CD8-positive, alpha-beta T cell (primary cell): ENCODE measurements at regions of chr3 and their contacts with region 1.

Region 1: DNA sequence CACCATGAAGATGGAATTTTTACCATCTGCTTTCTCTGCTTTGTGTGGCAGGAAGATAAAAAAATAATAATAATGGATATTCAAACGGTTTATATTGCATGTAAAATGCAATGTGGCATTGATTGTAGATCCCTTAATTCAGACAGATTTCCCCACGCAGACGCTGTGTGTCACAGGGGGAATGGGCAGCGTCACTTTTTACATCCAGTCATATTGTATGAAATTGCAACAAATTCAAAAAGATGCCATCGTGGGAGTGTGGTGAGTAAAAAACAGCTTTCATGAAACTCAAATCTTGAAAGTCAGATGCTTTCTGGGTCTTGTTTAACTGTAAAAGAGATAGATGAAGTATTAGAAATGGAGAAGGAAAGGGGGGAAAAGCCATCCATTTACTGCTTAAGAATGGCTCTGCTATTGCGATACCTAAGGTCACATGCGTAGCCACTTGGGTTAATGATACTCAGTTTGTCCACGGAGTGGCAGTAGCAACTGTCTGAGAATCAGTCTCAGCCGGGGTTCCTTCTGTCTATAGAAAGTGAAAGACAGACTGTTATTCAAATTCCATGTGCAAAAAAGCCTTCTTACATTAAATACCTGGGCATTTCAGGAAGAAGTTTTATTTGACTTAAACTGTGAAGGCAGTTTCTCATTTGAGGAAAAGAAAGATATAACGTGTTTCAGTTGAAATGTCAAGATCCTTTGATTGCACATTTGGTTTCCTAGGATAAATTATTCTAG is 28.5 kb downstream of the BTD start:
- DNase-seq: peak; percentile 34 to 87 (median 60)
- ATAC-seq: peak; percentile 100
- H3K4me3 ChIP-seq: no peak overlapping the region
- H3K4me3 Mint-ChIP-seq: peak overlapping the region; percentile 64
- H3K27ac ChIP-seq: no peak overlapping the region
- H3K27ac Mint-ChIP-seq: peak overlapping the region; percentile 16
- H3K4me1 ChIP-seq: peaks cover 3% of the 10 kb centered on the region
- H3K4me1 Mint-ChIP-seq: peaks cover 23% of the 10 kb centered on the region
- H3K27me3 ChIP-seq: no peaks in the 10 kb centered on the region
- H3K27me3 Mint-ChIP-seq: no peaks in the 10 kb centered on the region
- CTCF ChIP-seq: peak; percentile 60

Region 2: DNA sequence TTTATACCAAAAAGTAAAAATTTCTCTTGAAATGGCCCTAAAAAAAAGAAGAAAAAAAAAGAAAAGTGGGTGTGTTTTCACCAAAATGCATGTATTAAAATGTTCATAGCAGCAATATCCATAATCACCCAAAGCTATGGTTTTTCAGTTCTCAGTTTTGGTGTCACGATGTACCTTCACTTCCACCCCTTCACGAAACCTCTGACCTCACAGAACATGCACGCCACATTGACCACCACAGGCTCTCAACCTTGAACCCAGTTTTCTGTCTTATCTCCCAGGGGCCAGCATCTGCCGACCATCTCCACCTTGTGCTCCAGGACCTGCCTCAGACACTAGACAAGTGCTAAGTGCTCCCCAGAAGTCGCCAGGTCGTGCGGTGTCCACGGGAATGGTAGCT is 138.9 kb before region 1 on chr3:
- CTCF ChIA-PET with region 1: no interaction called
- POLR2A ChIA-PET with region 1: no interaction called
- intact Hi-C with region 1: no loop called
- DNase-seq: no peak
- ATAC-seq: no peak
- H3K4me3 ChIP-seq: no peak overlapping the region
- H3K4me3 Mint-ChIP-seq: no peak overlapping the region
- H3K27ac ChIP-seq: no peak overlapping the region
- H3K27ac Mint-ChIP-seq: no peak overlapping the region
- H3K4me1 ChIP-seq: no peaks in the 10 kb centered on the region
- H3K4me1 Mint-ChIP-seq: peaks cover 5% of the 10 kb centered on the region
- H3K27me3 ChIP-seq: no peaks in the 10 kb centered on the region
- H3K27me3 Mint-ChIP-seq: no peaks in the 10 kb centered on the region
- CTCF ChIP-seq: no peak

Region 3: GRCh38 chr3:15667484-15667883 is 37.5 kb after region 1 on chr3:
- CTCF ChIA-PET with region 1: no interaction called
- POLR2A ChIA-PET with region 1: interaction called, 3 read pairs
- intact Hi-C with region 1: loop called (anchors 2 to 5 kb)
- DNase-seq: peak in 6 of 9 experiments; percentile 11 to 81 (median 46)
- ATAC-seq: peak; percentile 86
- H3K4me3 ChIP-seq: no peak overlapping the region
- H3K4me3 Mint-ChIP-seq: no peak overlapping the region
- H3K27ac ChIP-seq: no peak overlapping the region
- H3K27ac Mint-ChIP-seq: peak overlapping the region; percentile 17
- H3K4me1 ChIP-seq: peaks cover 15% of the 10 kb centered on the region
- H3K4me1 Mint-ChIP-seq: peaks cover 23% of the 10 kb centered on the region
- H3K27me3 ChIP-seq: no peaks in the 10 kb centered on the region
- H3K27me3 Mint-ChIP-seq: no peaks in the 10 kb centered on the region
- CTCF ChIP-seq: no peak

Region 4: DNA sequence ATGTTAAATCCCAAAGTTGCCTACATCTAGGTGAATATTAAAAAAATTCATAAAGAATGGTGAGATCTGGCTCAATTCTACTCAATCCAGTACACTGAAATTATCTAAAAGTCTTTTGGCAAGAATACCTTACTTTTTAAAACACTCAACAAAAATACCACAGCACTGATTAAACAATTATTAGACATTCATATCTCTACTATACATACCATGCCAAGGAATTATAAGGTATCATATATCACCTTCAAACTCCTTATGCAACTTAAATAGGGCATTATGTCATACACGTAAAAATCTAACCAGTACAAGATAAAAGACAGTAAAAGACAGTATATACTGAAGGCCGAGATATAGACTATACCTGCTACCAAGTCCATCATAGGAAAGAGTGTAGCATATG is 173.9 kb after region 1 on chr3:
- CTCF ChIA-PET with region 1: interaction called, 10 read pairs
- POLR2A ChIA-PET with region 1: no interaction called
- intact Hi-C with region 1: no loop called
- DNase-seq: no peak
- ATAC-seq: no peak
- H3K4me3 ChIP-seq: no peak overlapping the region
- H3K4me3 Mint-ChIP-seq: no peak overlapping the region
- H3K27ac ChIP-seq: no peak overlapping the region
- H3K27ac Mint-ChIP-seq: no peak overlapping the region
- H3K4me1 ChIP-seq: peaks cover 26% of the 10 kb centered on the region
- H3K4me1 Mint-ChIP-seq: peaks cover 71% of the 10 kb centered on the region
- H3K27me3 ChIP-seq: no peaks in the 10 kb centered on the region
- H3K27me3 Mint-ChIP-seq: no peaks in the 10 kb centered on the region
- CTCF ChIP-seq: no peak

Region 5: GRCh38 chr3:15953841-15954240 is 323.8 kb after region 1 on chr3:
- CTCF ChIA-PET with region 1: interaction called, 4 read pairs
- POLR2A ChIA-PET with region 1: no interaction called
- intact Hi-C with region 1: loop called in 1 of 2 experiments (anchors 5 kb)
- DNase-seq: peak in 1 of 9 experiments; percentile 14
- ATAC-seq: no peak
- H3K4me3 ChIP-seq: no peak overlapping the region
- H3K4me3 Mint-ChIP-seq: no peak overlapping the region
- H3K27ac ChIP-seq: no peak overlapping the region
- H3K27ac Mint-ChIP-seq: no peak overlapping the region
- H3K4me1 ChIP-seq: no peaks in the 10 kb centered on the region
- H3K4me1 Mint-ChIP-seq: no peaks in the 10 kb centered on the region
- H3K27me3 ChIP-seq: no peaks in the 10 kb centered on the region
- H3K27me3 Mint-ChIP-seq: no peaks in the 10 kb centered on the region
- CTCF ChIP-seq: no peak

Region 6: GRCh38 chr3:16177962-16178627 is 548.1 kb after region 1 on chr3:
- CTCF ChIA-PET with region 1: interaction called, 4 read pairs
- POLR2A ChIA-PET with region 1: no interaction called
- intact Hi-C with region 1: loop called (anchors 2 kb)
- DNase-seq: peak; percentile 12 to 67 (median 53)
- ATAC-seq: peak; percentile 62
- H3K4me3 ChIP-seq: no peak overlapping the region
- H3K4me3 Mint-ChIP-seq: no peak overlapping the region
- H3K27ac ChIP-seq: no peak overlapping the region
- H3K27ac Mint-ChIP-seq: no peak overlapping the region
- H3K4me1 ChIP-seq: no peaks in the 10 kb centered on the region
- H3K4me1 Mint-ChIP-seq: peaks cover 3% of the 10 kb centered on the region
- H3K27me3 ChIP-seq: no peaks in the 10 kb centered on the region
- H3K27me3 Mint-ChIP-seq: peaks cover 18% of the 10 kb centered on the region
- CTCF ChIP-seq: peak; percentile 73

Region 7: DNA sequence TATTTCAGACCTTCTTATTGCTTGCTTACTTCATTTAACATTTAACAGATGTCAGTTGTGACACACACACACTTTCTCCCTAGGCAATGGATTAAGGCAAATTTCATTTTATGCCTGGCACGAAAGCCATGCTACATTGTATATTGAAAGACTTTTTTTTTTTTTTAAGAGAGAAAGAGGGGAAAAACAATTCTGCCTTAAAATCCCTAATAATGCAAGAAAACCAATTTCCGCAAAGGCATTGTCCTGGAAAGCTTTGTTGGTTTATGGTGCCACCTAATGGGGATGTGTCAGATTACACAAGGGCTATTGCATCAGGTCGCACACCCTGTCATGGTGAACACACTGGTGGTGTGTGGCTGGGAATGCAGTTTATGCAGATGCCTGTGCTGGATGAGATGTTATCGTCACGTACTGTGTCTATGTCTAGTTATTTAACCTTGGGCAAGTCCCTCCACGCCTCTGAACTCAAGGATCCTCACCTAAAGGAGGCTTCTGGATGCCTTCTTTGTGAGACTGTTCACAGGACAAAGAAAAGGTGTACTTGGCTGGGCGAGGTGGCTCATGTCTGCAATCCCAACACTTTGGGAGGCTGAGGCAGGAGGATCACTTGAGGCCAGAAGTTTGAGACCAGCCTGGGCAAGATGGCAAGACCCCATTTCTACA is 920.8 kb after region 1 on chr3:
- CTCF ChIA-PET with region 1: no interaction called
- POLR2A ChIA-PET with region 1: no interaction called
- intact Hi-C with region 1: loop called in 1 of 2 experiments (anchors 5 kb)
- DNase-seq: peak; percentile 51 to 89 (median 73)
- ATAC-seq: peak; percentile 100
- H3K4me3 ChIP-seq: no peak overlapping the region
- H3K4me3 Mint-ChIP-seq: no peak overlapping the region
- H3K27ac ChIP-seq: no peak overlapping the region
- H3K27ac Mint-ChIP-seq: peak overlapping the region; percentile 60
- H3K4me1 ChIP-seq: no peaks in the 10 kb centered on the region
- H3K4me1 Mint-ChIP-seq: peaks cover 3% of the 10 kb centered on the region
- H3K27me3 ChIP-seq: no peaks in the 10 kb centered on the region
- H3K27me3 Mint-ChIP-seq: no peaks in the 10 kb centered on the region
- CTCF ChIP-seq: peak; percentile 87